Left ventricle myocardium inferior (tissue), 1 donor: ENCODE measurements at regions of chr3 and their contacts with region 1.

Region 1: DNA sequence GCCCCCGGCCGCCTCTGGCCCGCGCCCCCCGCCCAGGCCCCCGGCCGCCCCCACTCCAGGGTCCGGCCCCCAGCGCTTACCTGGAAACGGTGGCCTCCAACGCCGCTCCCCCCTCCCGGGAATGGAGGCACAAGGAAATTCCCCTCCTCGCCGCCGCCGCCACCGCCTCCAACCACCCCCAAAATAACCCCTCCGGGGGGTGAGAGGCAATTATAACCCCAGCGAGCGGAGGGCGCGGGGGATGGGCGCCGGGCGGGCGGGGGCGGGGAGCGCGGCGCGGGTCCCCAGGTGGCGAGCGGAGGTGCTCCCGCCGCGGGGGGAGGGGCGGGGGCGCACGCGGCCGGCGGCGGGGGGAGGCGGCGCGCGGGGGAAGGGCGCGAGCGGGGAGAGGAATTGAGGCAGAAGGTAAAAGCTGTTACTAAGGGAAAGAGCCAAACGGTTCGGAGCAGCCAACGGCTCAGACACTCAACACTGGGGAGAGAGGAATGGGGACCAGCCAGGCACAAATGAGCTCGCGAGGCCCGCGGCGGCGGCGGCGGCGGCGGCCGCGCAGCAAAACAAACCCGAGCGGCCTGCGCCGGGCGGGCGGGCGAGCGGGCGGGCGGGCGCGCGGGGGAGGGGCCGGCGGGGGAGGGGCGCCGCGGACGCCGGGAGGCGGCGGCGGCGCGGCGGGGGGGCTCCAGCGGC is at the start of gene TBL1XR1:
- DNase-seq: peak; percentile 93
- H3K4me3 ChIP-seq: peak within 1 kb of the TSS; percentile 87
- H3K27ac ChIP-seq: peak within 1 kb of the TSS; percentile 98
- H3K4me1 ChIP-seq: peaks cover 44% of the 10 kb centered on the region
- H3K27me3 ChIP-seq: no peaks in the 10 kb centered on the region
- CTCF ChIP-seq: no peak
- total RNA-seq, gene TBL1XR1: 102 TPM

Region 2: GRCh38 chr3:177050501-177051237 is 146.5 kb before region 1 on chr3:
- intact Hi-C with region 1: loop called (anchors 5 kb)
- DNase-seq: no peak
- H3K4me3 ChIP-seq: no peak overlapping the region
- H3K27ac ChIP-seq: peak overlapping the region; percentile 28
- H3K4me1 ChIP-seq: peaks cover 27% of the 10 kb centered on the region
- H3K27me3 ChIP-seq: no peaks in the 10 kb centered on the region
- CTCF ChIP-seq: peak; percentile 68

Region 3: DNA sequence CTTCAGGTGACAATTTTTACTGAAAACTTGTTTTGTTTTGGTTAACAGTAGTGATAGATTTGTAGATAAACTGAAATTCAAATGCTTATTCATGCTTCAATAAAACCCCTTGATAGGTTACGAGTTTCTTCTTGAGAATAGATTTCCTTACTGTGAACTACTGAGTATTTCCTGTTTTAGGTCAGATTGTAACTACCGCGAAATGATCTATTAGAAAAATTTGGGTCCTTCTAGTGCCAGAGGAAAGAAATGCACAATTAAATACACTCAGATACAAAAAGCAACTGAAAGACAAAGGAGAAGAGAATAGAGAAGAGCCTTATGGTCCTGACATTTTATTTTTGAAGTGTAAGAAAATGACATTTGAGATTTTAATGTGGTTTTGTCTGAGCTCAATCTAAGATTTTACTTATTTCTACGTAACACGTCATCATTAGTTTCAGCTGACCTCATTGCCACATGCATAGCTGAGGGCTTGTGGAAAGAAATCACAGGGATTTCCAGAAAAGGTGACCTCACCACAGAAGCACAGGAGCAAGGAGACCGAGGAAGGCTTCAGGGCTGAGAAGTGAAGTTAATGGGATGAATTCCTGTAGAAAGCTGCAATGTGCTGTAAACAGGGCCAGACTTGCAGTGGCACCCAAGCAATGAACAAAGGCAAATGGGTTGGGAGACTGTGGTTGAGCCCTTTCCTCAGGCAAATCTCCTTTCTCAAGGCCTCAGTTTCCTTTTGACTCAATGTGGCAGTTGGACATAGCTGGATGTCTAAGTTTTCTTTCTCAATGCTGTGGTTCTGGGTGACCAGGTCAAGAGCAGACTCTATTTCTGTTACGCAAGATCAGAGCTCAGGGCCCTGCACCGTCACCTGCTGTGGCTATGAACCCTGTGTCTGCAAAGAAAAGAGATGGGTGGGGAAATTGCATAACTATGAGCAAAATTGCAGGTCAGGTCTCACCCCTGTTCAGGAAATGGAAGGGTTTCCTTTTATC is 252.1 kb after region 1 on chr3:
- intact Hi-C with region 1: no loop called
- DNase-seq: no peak
- H3K4me3 ChIP-seq: no peak overlapping the region
- H3K27ac ChIP-seq: no peak overlapping the region
- H3K4me1 ChIP-seq: peaks cover 20% of the 10 kb centered on the region
- H3K27me3 ChIP-seq: no peaks in the 10 kb centered on the region
- CTCF ChIP-seq: no peak